ENCODE measurements at regions of chr9 and their contacts with region 1.

Region 1: DNA sequence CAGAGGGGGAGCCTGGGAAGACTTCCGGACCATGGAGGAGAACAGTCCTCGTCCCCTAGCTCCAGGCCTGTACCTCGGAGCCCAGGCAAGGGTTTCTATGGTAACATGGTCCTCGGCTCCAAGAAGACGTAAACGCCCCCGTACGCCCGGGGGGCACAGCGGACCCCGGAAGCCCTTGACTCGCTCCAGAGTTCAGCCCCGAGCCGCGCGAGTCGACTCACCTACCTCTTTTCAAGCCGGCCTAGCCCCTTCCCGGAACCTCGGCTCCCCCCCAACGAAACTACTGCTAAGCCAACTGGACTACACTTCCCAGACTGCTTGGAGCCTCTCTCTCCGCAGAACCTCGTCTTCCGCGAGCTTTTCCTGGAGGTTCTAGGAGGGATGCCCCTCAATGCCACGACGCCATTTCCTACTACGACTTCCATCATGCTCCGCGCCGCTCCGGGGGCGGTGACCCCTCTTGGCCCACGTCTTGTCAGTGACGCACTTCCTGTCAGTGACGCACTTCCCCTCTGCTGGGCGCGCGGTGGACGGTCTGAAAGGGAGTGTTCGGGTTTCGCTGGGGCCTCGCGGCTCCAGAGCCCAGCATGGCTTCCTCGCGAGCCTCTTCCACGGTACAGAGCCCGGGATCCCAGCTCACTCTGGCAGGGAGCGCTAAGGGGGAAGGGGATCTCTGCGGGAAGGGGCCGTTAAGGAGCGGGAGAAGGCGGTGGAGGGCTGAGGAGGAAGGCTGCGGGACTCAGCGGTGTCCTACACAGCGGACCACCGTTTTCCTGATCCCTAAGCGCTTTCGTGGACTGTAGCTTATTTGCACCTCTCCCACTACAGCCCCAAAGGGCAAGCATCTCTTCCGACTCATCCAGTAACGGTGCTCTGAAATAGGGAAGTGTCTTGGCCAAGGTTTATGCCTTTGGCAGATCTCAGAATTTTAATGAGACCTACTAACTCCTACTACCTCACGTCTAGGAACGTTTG is at the starts of genes CDC26 and PRPF4:
- DNase-seq: peak; percentile 88 to 98 (median 93)
- ATAC-seq: peak; percentile 91
- H3K4me3 ChIP-seq: peak within 1 kb of the TSS; percentile 77
- H3K4me3 Mint-ChIP-seq: no peak within 1 kb of the TSS
- H3K27ac ChIP-seq: peak within 1 kb of the TSS; percentile 93 to 94
- H3K27ac Mint-ChIP-seq: no peak within 1 kb of the TSS
- H3K4me1 ChIP-seq: peaks cover 6% of the 10 kb centered on the region
- H3K4me1 Mint-ChIP-seq: peaks cover 24% of the 10 kb centered on the region
- H3K27me3 ChIP-seq: no peaks in the 10 kb centered on the region
- H3K27me3 Mint-ChIP-seq: no peaks in the 10 kb centered on the region
- CTCF ChIP-seq: no peak
- total RNA-seq, gene CDC26: 15.8 to 18.0 TPM
- total RNA-seq, gene PRPF4: 23.4 to 25.5 TPM

Region 2: GRCh38 chr9:113150670-113151611 is 124.5 kb before region 1 on chr9 and contains the start of gene SLC31A2:
- CTCF ChIA-PET with region 1: no interaction called
- POLR2A ChIA-PET with region 1: no interaction called
- intact Hi-C with region 1: loop called in 1 of 2 experiments (anchors 2 kb)
- DNase-seq: peak; percentile 68 to 92 (median 81)
- ATAC-seq: peak; percentile 95
- H3K4me3 ChIP-seq: peak within 1 kb of the TSS; percentile 90
- H3K4me3 Mint-ChIP-seq: peak within 1 kb of the TSS; percentile 88
- H3K27ac ChIP-seq: peak within 1 kb of the TSS; percentile 55 to 56
- H3K27ac Mint-ChIP-seq: peak within 1 kb of the TSS; percentile 53
- H3K4me1 ChIP-seq: peaks cover 25% of the 10 kb centered on the region
- H3K4me1 Mint-ChIP-seq: peaks cover 35% of the 10 kb centered on the region
- H3K27me3 ChIP-seq: peaks cover 2% of the 10 kb centered on the region in 2 experiments
- H3K27me3 Mint-ChIP-seq: peaks cover 6% of the 10 kb centered on the region
- CTCF ChIP-seq: peak; percentile 61
- total RNA-seq, gene SLC31A2: 4.8 to 5.4 TPM

Region 3: DNA sequence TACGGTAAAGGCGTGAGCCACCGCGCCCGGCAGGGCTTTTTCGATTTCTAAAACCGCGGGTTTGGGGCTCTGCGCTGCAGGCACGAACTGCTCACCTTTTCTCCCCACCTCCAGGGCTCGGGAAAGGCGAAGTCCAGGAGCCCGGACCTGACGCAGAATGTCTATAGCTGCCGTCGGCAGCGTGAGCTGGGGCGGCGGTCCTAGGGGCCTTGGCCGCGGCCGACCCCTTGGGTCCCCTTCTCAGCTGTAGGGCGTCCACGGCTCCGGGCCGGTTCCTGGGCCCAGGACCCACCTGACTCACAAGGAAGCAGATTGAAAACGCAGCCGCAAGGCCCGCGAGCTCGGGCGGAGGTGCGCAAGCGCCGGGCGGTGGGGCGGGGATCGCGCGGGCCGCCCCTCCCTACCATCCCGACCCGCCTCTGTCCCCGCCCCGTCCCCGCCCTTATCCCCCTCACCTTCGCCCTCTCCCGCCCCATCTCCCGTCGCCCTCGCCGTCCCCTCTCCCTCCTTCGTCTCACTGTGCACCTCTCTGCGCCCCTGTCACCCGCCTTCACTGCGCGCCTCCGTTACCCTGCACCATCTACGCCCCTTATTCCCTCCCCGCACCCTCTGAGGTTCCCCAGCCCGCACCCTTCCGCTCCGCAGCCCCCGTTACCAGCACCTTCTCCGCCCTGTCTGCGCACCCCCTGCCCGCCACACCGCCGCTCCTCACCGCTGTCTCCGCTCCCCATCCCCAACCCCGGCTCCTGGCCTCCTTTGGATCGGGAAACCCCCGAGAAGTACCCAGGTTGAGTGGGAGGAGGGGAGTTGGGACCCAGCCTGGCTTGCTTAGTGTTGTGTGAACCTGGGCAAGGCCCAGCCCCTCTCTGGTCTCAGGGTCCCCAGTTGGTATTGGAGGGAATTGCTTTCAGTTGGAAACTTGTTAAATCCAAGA is 101.5 kb after region 1 on chr9 and contains the start of gene HDHD3:
- CTCF ChIA-PET with region 1: no interaction called
- POLR2A ChIA-PET with region 1: interaction called, 8 read pairs
- intact Hi-C with region 1: loop called in 1 of 2 experiments (anchors 1 kb)
- DNase-seq: peak; percentile 50 to 93 (median 76)
- ATAC-seq: peak; percentile 88
- H3K4me3 ChIP-seq: peak within 1 kb of the TSS; percentile 96
- H3K4me3 Mint-ChIP-seq: peak within 1 kb of the TSS; percentile 87
- H3K27ac ChIP-seq: peak within 1 kb of the TSS; percentile 59 to 65
- H3K27ac Mint-ChIP-seq: peak within 1 kb of the TSS; percentile 90
- H3K4me1 ChIP-seq: peaks cover 23% of the 10 kb centered on the region
- H3K4me1 Mint-ChIP-seq: peaks cover 21% of the 10 kb centered on the region
- H3K27me3 ChIP-seq: no peaks in the 10 kb centered on the region
- H3K27me3 Mint-ChIP-seq: no peaks in the 10 kb centered on the region
- CTCF ChIP-seq: no peak
- total RNA-seq, gene HDHD3: 12.8 to 13.2 TPM

Region 4: GRCh38 chr9:113410207-113410864 is 134.9 kb after region 1 on chr9 and contains the starts of genes C9orf43 and POLE3:
- CTCF ChIA-PET with region 1: interaction called, 5 read pairs
- POLR2A ChIA-PET with region 1: interaction called, 29 read pairs
- intact Hi-C with region 1: loop called (anchors 1 to 2 kb)
- DNase-seq: peak; percentile 89 to 97 (median 92)
- ATAC-seq: peak; percentile 83
- H3K4me3 ChIP-seq: peak within 1 kb of the TSS; percentile 83
- H3K4me3 Mint-ChIP-seq: peak within 1 kb of the TSS; percentile 99
- H3K27ac ChIP-seq: peak within 1 kb of the TSS; percentile 74 to 94
- H3K27ac Mint-ChIP-seq: peak within 1 kb of the TSS; percentile 94
- H3K4me1 ChIP-seq: peaks cover 19% of the 10 kb centered on the region
- H3K4me1 Mint-ChIP-seq: peaks cover 37% of the 10 kb centered on the region
- H3K27me3 ChIP-seq: no peaks in the 10 kb centered on the region
- H3K27me3 Mint-ChIP-seq: no peaks in the 10 kb centered on the region
- CTCF ChIP-seq: no peak
- total RNA-seq, gene C9orf43: 0.60 to 0.95 TPM
- total RNA-seq, gene POLE3: 63.6 to 64.9 TPM

Region 5: GRCh38 chr9:113591001-113591898 is 315.8 kb after region 1 on chr9:
- CTCF ChIA-PET with region 1: interaction called, 3 read pairs
- POLR2A ChIA-PET with region 1: no interaction called
- intact Hi-C with region 1: loop called in 1 of 2 experiments (anchors 5 kb)
- DNase-seq: peak in 11 of 14 experiments; percentile 20 to 69 (median 40)
- ATAC-seq: no peak
- H3K4me3 ChIP-seq: no peak overlapping the region
- H3K4me3 Mint-ChIP-seq: no peak overlapping the region
- H3K27ac ChIP-seq: no peak overlapping the region
- H3K27ac Mint-ChIP-seq: no peak overlapping the region
- H3K4me1 ChIP-seq: peaks cover 42% of the 10 kb centered on the region
- H3K4me1 Mint-ChIP-seq: peaks cover 33% of the 10 kb centered on the region
- H3K27me3 ChIP-seq: no peaks in the 10 kb centered on the region
- H3K27me3 Mint-ChIP-seq: no peaks in the 10 kb centered on the region
- CTCF ChIP-seq: peak; percentile 59

Region 6: DNA sequence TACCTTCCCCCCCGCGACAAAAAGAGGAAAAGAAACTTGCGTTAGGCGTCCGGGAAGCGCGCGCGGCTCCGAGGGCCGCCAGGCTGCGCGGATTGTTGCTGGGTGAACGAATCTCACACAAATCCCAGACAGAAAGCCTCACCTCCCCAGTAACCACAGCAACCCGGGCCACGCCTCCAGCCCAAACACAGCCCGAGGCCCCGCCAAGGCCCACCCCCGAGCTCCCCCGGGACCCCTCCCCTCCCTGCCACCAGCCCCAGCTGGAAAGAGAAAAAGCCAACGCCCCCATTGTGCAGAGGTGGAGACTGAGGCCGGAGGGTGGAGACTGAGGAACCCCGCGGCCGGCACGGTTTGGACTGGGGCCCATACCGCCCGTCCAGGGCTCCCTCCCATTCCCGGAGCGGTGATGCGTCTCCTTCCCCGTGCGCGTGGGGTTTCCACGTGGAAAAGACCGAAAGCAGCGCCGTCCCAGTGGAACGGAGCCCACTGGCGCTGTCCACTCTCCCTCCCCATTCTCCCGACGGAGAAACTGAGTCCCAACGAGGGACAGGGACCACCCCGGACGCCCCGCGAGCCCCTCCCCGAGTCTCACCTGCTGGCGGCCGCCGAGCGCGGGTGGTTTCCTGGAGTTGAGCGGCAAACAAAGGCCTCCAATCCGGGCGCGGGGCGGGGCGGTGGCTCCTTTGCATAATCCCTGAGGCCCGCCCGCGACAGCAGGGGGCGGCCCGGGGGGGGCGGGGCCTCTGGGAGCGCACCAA is 1122.6 kb after region 1 on chr9:
- CTCF ChIA-PET with region 1: no interaction called
- POLR2A ChIA-PET with region 1: no interaction called
- intact Hi-C with region 1: loop called in 1 of 2 experiments (anchors 10 kb)
- DNase-seq: peak; percentile 90 to 98 (median 96)
- ATAC-seq: peak; percentile 84
- H3K4me3 ChIP-seq: peak overlapping the region; percentile 99
- H3K4me3 Mint-ChIP-seq: peak overlapping the region; percentile 97
- H3K27ac ChIP-seq: peak overlapping the region; percentile 93 to 94
- H3K27ac Mint-ChIP-seq: peak overlapping the region; percentile 98
- H3K4me1 ChIP-seq: peaks cover 53% of the 10 kb centered on the region
- H3K4me1 Mint-ChIP-seq: peaks cover 45% of the 10 kb centered on the region
- H3K27me3 ChIP-seq: no peaks in the 10 kb centered on the region
- H3K27me3 Mint-ChIP-seq: no peaks in the 10 kb centered on the region
- CTCF ChIP-seq: no peak

Measured in CD4-positive, alpha-beta T cell (primary cell).